Naive thymus-derived CD4-positive, alpha-beta T cell (primary cell): ENCODE measurements at regions of chr14 and their contacts with region 1.

Region 1: GRCh38 chr14:60331201-60332045 is 82.4 kb downstream of the PPM1A start:
- DNase-seq: peak; percentile 53 to 80 (median 74)
- ATAC-seq: peak; percentile 79
- H3K4me3 ChIP-seq: peak overlapping the region; percentile 55
- H3K4me3 Mint-ChIP-seq: peak overlapping the region; percentile 87 to 98 (median 96)
- H3K27ac ChIP-seq: peak overlapping the region; percentile 55
- H3K27ac Mint-ChIP-seq: peak overlapping the region; percentile 87 to 98 (median 92)
- H3K4me1 ChIP-seq: peaks cover 4 to 13% of the 10 kb centered on the region in 2 donors
- H3K4me1 Mint-ChIP-seq: peaks cover 12 to 46% (median 29%) of the 10 kb centered on the region in 7 donors
- H3K27me3 ChIP-seq: no peaks in the 10 kb centered on the region
- H3K27me3 Mint-ChIP-seq: peaks cover 15 to 44% (median 38%) of the 10 kb centered on the region in 5 donors

Region 2: GRCh38 chr14:59964251-59965007 is 367.0 kb before region 1 on chr14:
- CTCF ChIA-PET with region 1: no interaction called
- POLR2A ChIA-PET with region 1: no interaction called
- intact Hi-C with region 1: loop called (anchors 1 to 5 kb)
- DNase-seq: peak in 6 of 9 donors; percentile 6 to 38 (median 20)
- ATAC-seq: peak; percentile 44
- H3K4me3 ChIP-seq: no peak overlapping the region
- H3K4me3 Mint-ChIP-seq: peak overlapping the region; percentile 77 to 95 (median 88)
- H3K27ac ChIP-seq: no peak overlapping the region
- H3K27ac Mint-ChIP-seq: peak overlapping the region in 8 of 9 donors; percentile 40 to 99 (median 88)
- H3K4me1 ChIP-seq: no peaks in the 10 kb centered on the region
- H3K4me1 Mint-ChIP-seq: peaks cover 3 to 14% (median 10%) of the 10 kb centered on the region in 7 donors
- H3K27me3 ChIP-seq: no peaks in the 10 kb centered on the region
- H3K27me3 Mint-ChIP-seq: peaks cover 0 to 15% (median 5%) of the 10 kb centered on the region in 5 donors

Region 3: GRCh38 chr14:60153991-60154390 is 177.4 kb before region 1 on chr14:
- CTCF ChIA-PET with region 1: no interaction called
- POLR2A ChIA-PET with region 1: no interaction called
- intact Hi-C with region 1: no loop called
- DNase-seq: no peak
- ATAC-seq: peak; percentile 26
- H3K4me3 ChIP-seq: no peak overlapping the region
- H3K4me3 Mint-ChIP-seq: peak overlapping the region in 5 of 10 donors; percentile 8 to 46 (median 31)
- H3K27ac ChIP-seq: peak overlapping the region; percentile 47
- H3K27ac Mint-ChIP-seq: peak overlapping the region; percentile 4 to 87 (median 73)
- H3K4me1 ChIP-seq: peaks cover 23 to 26% of the 10 kb centered on the region in 2 donors
- H3K4me1 Mint-ChIP-seq: peaks cover 38 to 75% (median 69%) of the 10 kb centered on the region in 7 donors
- H3K27me3 ChIP-seq: no peaks in the 10 kb centered on the region
- H3K27me3 Mint-ChIP-seq: no peaks in the 10 kb centered on the region

Region 4: DNA sequence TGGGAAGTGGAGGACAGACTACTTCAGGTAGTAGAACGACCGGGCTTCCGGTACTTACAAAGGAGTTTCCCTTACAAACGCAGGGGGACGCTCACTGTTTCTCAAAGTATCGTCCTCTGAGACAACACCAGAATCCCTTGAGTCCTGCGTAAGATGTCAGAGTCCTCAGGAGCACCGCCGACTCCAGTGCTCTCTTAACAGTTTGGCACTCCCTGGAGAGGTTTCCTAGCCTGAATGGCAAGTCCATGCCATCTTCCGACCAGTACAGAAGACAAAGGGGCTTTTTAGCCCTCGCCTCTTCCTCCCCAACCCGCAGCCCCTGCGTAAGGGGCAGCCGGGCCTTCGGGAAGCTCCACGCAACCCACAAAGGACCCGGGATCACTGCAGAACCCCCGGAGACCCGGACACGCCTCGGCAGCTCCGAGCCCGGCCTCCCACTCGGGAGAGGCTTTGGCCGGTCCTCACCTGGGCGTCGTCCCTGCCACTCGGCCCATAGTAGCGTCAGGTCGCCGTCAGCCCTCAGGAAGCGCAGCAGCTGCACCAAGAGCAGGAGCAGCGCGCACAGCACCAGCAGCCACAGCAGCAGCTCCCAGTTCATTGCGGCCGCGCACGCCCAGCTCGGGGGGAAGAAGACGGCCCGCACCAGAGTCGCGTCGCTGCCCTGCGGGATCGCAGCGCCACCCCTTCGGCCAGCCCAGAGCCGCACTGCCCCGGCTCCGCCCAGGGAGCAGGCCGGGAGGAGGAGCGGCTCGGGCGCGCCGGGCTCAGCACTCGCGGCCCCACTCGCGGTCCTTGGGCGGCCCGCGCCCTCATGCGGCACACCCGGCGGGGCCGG is 166.5 kb before region 1 on chr14 and contains the start of gene DHRS7:
- CTCF ChIA-PET with region 1: no interaction called
- POLR2A ChIA-PET with region 1: interaction called, 6 read pairs
- intact Hi-C with region 1: loop called in 1 of 2 experiments (anchors 1 kb)
- DNase-seq: peak; percentile 47 to 75 (median 60)
- ATAC-seq: peak; percentile 85
- H3K4me3 ChIP-seq: peak within 1 kb of the TSS; percentile 85
- H3K4me3 Mint-ChIP-seq: peak within 1 kb of the TSS; percentile 86 to 99 (median 95)
- H3K27ac ChIP-seq: peak within 1 kb of the TSS; percentile 90
- H3K27ac Mint-ChIP-seq: peak within 1 kb of the TSS; percentile 91 to 99 (median 97)
- H3K4me1 ChIP-seq: peaks cover 20 to 27% of the 10 kb centered on the region in 2 donors
- H3K4me1 Mint-ChIP-seq: peaks cover 22 to 53% (median 42%) of the 10 kb centered on the region in 7 donors
- H3K27me3 ChIP-seq: no peaks in the 10 kb centered on the region
- H3K27me3 Mint-ChIP-seq: no peaks in the 10 kb centered on the region
- total RNA-seq, gene DHRS7: 29.9 to 50.9 (median 38.0) TPM

Region 5: DNA sequence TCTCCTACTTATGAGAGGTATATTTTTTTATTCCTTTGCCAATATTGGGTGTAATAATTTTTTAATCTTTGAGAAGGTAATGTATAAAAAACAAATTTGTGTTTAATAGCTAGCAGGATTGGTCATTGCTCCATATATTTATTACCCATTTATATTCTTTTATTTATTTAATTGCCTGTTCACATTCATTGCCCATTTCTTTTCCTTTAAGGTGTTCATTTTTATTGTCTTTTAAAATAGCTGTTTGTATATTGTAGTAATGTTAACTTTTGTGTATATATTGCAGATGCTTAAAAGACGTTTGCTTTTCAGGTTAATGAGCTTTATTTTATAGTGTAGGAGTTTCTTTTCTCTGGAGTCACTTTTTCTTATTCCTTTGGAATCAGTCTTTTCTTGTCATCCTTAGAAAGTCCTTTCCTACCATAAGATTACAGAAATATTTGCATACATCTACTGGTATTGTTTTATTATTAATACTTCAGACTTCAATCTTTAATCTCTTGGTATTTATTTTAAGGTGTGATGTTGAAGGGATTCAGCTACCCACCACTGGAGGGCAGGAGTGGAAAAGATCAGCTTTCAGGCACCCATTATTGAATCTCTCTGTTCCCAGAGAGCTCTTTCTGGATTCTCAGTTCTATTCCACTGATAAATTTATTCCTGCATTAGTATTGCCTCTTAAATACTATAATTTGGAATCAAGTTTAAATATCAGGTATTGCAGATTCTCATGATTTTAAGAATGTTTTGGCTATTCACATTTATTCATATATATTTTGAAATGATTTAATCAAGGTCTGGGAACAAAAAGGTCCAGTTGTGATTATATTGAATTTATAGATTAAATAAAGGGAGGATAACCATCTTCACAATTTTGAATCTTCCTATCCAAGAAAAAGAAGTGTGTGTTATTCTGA is 65.1 kb before region 1 on chr14:
- CTCF ChIA-PET with region 1: interaction called, 5 read pairs
- POLR2A ChIA-PET with region 1: interaction called, 4 read pairs
- intact Hi-C with region 1: loop called in 1 of 2 experiments (anchors 1 kb)
- DNase-seq: peak in 4 of 9 donors; percentile 12 to 22 (median 16)
- ATAC-seq: peak; percentile 70
- H3K4me3 ChIP-seq: no peak overlapping the region
- H3K4me3 Mint-ChIP-seq: no peak overlapping the region
- H3K27ac ChIP-seq: no peak overlapping the region
- H3K27ac Mint-ChIP-seq: no peak overlapping the region
- H3K4me1 ChIP-seq: peaks cover under 1 to 3% of the 10 kb centered on the region in 2 donors
- H3K4me1 Mint-ChIP-seq: peaks cover 10 to 68% (median 53%) of the 10 kb centered on the region in 7 donors
- H3K27me3 ChIP-seq: no peaks in the 10 kb centered on the region
- H3K27me3 Mint-ChIP-seq: no peaks in the 10 kb centered on the region

Region 6: GRCh38 chr14:60637479-60638315 is 306.3 kb after region 1 on chr14:
- CTCF ChIA-PET with region 1: no interaction called
- POLR2A ChIA-PET with region 1: no interaction called
- intact Hi-C with region 1: loop called in 1 of 2 experiments (anchors 10 kb)
- DNase-seq: no peak
- ATAC-seq: no peak
- H3K4me3 ChIP-seq: no peak overlapping the region
- H3K4me3 Mint-ChIP-seq: peak overlapping the region in 9 of 10 donors; percentile 19 to 74 (median 63)
- H3K27ac ChIP-seq: no peak overlapping the region
- H3K27ac Mint-ChIP-seq: no peak overlapping the region
- H3K4me1 ChIP-seq: peaks cover 8 to 11% of the 10 kb centered on the region in 2 donors
- H3K4me1 Mint-ChIP-seq: peaks cover 7 to 29% (median 21%) of the 10 kb centered on the region in 7 donors
- H3K27me3 ChIP-seq: peaks cover 0 to 11% of the 10 kb centered on the region in 2 donors
- H3K27me3 Mint-ChIP-seq: peaks cover 66 to 85% (median 75%) of the 10 kb centered on the region in 5 donors

Region 7: GRCh38 chr14:61252369-61253063 is 921.1 kb after region 1 on chr14:
- CTCF ChIA-PET with region 1: interaction called, 4 read pairs
- POLR2A ChIA-PET with region 1: no interaction called
- intact Hi-C with region 1: loop called (anchors 5 kb)
- DNase-seq: peak; percentile 12 to 68 (median 50)
- ATAC-seq: peak; percentile 95
- H3K4me3 ChIP-seq: no peak overlapping the region
- H3K4me3 Mint-ChIP-seq: no peak overlapping the region
- H3K27ac ChIP-seq: no peak overlapping the region
- H3K27ac Mint-ChIP-seq: no peak overlapping the region
- H3K4me1 ChIP-seq: no peaks in the 10 kb centered on the region
- H3K4me1 Mint-ChIP-seq: peaks cover 0 to 26% (median 0%) of the 10 kb centered on the region in 7 donors
- H3K27me3 ChIP-seq: peaks cover 0 to 4% of the 10 kb centered on the region in 2 donors
- H3K27me3 Mint-ChIP-seq: peaks cover 11 to 25% (median 17%) of the 10 kb centered on the region in 5 donors